Colonic mucosa (tissue), 4 donors: ENCODE measurements at regions of chr3 and their contacts with region 1.

Region 1: GRCh38 chr3:141355242-141355641 is 13.1 kb upstream of the ZBTB38 start:
- DNase-seq: no peak
- H3K4me3 ChIP-seq: no peak overlapping the region
- H3K27ac ChIP-seq: no peak overlapping the region
- H3K4me1 ChIP-seq: no peaks in the 10 kb centered on the region
- H3K27me3 ChIP-seq: no peaks in the 10 kb centered on the region
- CTCF ChIP-seq: no peak

Region 2: DNA sequence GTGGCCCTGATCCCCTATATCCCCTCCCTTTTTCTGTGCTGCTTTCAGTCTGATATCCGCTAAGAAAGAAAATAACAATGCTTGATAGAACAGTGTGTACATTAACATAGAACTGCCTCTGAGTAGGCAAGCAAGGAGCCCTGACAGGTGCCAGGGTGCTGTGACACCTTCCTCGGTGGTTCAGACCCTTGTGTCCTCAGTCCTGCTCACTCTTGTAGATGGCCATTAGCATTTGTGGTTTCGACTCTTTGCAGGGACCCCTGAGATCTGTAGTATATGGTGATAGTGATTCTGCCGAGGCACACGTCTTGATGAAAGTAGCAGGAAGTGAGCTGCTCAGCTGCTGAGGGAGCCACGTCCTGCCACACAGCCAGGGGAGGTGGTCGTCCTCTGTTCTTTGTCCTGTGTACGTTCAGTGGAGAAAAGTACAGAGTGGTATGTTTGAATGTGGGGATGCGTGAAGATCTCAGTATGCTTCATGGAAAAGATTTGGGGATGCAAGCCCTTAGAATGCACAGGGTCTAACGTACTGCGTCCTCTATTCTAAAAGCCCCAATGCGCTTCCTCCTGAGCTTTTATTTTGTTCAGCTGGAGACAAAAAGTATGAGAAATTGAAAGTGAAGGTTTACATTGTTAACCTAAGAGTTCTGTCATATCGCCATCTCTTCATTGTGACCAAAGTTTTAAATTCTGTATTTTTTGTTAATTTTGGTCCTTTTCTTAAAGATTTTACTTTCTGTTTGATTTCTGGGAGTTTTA is 88.3 kb before region 1 on chr3:
- intact Hi-C with region 1: no loop called
- DNase-seq: no peak
- H3K4me3 ChIP-seq: no peak overlapping the region
- H3K27ac ChIP-seq: peak overlapping the region; percentile 27
- H3K4me1 ChIP-seq: no peaks in the 10 kb centered on the region
- H3K27me3 ChIP-seq: no peaks in the 10 kb centered on the region
- CTCF ChIP-seq: no peak

Region 3: DNA sequence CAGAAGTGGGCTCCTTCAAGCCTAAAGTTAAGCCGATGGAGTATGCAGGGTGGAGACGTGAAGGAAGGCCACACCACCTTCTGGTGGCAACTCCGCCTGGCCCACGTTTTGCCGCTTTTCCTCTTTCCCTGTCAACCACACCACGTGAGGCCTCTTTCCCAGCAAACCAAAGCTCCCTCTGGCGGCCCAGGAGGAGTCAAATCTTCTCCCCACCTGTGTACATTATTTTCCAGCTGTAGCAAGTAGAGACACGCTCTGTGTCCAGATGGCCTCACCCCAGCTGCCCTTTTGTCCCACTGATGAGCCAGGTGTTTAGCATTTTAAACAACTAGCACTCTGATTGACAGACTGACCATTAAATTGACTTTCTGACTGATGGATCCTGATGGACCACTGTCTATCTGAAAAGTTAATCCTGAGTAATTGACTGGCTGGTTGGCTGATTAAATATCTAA is 46.6 kb before region 1 on chr3:
- intact Hi-C with region 1: loop called (anchors 5 kb)
- DNase-seq: peak; percentile 84
- H3K4me3 ChIP-seq: no peak overlapping the region
- H3K27ac ChIP-seq: no peak overlapping the region
- H3K4me1 ChIP-seq: no peaks in the 10 kb centered on the region
- H3K27me3 ChIP-seq: no peaks in the 10 kb centered on the region
- CTCF ChIP-seq: peak; percentile 27

Region 4: GRCh38 chr3:141402476-141403171 is 47.4 kb after region 1 on chr3:
- intact Hi-C with region 1: no loop called
- DNase-seq: peak; percentile 70
- H3K4me3 ChIP-seq: peak overlapping the region; percentile 75
- H3K27ac ChIP-seq: peak overlapping the region; percentile 95
- H3K4me1 ChIP-seq: peaks cover 9% of the 10 kb centered on the region
- H3K27me3 ChIP-seq: no peaks in the 10 kb centered on the region
- CTCF ChIP-seq: no peak

Region 5: GRCh38 chr3:141477224-141477623 is 122.0 kb after region 1 on chr3:
- intact Hi-C with region 1: no loop called
- DNase-seq: no peak
- H3K4me3 ChIP-seq: no peak overlapping the region
- H3K27ac ChIP-seq: no peak overlapping the region
- H3K4me1 ChIP-seq: no peaks in the 10 kb centered on the region
- H3K27me3 ChIP-seq: no peaks in the 10 kb centered on the region
- CTCF ChIP-seq: no peak